ENCODE measurements at regions of chr18 and their contacts with region 1.

Region 1: DNA sequence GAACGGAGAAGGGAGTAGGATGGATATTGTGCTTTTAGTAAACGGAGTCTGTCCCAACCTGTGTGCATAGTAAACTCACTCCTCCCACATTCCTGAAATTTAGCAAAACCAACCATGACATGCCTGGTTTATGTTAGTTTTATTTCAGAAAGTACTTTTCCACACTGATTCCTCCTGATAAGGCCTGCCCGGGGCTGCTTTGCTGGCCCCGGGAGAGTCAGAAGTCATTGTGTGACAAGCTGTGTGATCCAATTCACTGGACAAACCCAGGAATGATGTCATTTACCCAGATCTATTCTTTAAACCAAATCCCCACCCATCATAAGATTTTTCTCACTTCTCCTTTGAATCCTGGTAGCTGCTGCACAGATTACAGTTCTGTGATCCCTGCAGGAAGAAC is 109.0 kb downstream of the SETBP1 start:
- DNase-seq: no peak
- ATAC-seq: no peak
- H3K4me3 ChIP-seq: peak overlapping the region in 1 of 4 donors; percentile 12
- H3K27ac ChIP-seq: peak overlapping the region; percentile 85 to 91 (median 89)
- H3K4me1 ChIP-seq: peaks cover 72 to 94% of the 10 kb centered on the region in 2 donors
- H3K27me3 ChIP-seq: no peaks in the 10 kb centered on the region
- CTCF ChIP-seq: no peak
- POLR2A ChIP-seq: no peak

Region 2: DNA sequence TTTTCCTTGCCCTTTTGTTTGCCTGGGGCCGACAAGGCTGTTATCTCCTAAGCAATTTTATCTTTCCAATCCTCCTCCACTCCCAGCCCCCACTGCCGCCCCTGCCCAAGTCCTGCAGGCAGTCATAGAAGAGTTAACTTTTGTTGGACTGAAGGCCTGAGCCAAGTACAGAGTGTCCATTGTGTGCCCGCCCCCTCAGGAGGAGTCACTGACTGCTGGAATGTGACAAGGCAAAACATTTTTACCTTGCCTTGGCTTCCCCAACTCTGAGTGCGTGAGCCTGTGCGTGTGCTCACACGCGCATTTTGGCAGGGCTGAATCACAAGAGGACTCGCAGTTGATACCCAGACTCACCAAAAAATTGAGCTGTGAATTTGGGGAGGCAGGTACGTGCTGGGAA is 92.8 kb before region 1 on chr18:
- in situ Hi-C with region 1: loop called in 1 of 4 experiments (anchors 25 kb)
- intact Hi-C with region 1: loop called (anchors 5 kb)
- DNase-seq: peak; percentile 36 to 69
- ATAC-seq: peak; percentile 77 to 86
- H3K4me3 ChIP-seq: peak overlapping the region; percentile 42 to 51 (median 48)
- H3K27ac ChIP-seq: peak overlapping the region; percentile 71 to 81 (median 80)
- H3K4me1 ChIP-seq: peaks cover 76 to 77% of the 10 kb centered on the region in 2 donors
- H3K27me3 ChIP-seq: no peaks in the 10 kb centered on the region
- CTCF ChIP-seq: no peak
- POLR2A ChIP-seq: no peak

Measured in gastrocnemius medialis (tissue), 4 donors.